ENCODE measurements at regions of chr18 and their contacts with region 1.

Region 1: DNA sequence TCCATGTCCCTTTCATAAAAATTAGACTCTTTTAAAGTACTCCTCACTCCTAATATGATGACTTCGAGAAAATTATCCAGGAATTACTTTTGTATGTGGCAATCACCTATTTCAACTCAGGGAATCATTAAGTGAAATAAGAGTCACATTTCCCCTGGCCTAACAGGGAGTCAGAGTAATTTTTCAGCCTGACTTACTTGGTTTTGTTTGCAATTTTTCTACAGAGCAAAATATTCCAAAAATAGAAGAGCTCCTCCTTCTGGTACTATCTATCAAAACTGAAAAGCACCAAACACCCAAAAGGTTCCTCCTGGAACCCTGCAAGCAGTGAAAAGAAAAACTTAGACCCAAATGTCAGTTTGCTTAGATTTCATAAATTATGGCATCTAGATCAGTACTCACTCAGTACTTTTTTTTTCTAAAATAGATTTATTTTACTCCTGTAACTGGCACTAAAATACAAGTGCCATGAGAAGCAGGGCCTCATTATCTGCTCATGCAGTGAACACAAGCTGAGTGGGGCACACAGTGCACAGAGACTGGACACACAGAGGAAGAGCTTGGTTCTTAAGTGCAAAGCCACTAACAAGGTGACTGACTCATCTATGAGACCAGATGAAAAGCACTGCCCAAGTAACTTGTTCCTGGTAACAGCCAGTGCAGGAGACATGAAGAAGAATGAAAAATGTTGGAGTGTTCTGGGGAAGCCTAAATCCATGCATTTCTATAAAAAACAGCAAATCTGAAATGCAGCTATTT is 28.7 kb downstream of the ACAA2 start:
- DNase-seq: peak; percentile 23
- ATAC-seq: peak; percentile 27
- H3K4me3 ChIP-seq: no peak overlapping the region
- H3K27ac ChIP-seq: no peak overlapping the region
- H3K4me1 ChIP-seq: 0 out of 2 replicates have a peak, but pooled peaks cover 4% of the 10 kb centered on the region
- H3K27me3 ChIP-seq: no peaks in the 10 kb centered on the region
- CTCF ChIP-seq: peak; percentile 39; the same call in 1 of the 2 replicates

Region 2: GRCh38 chr18:49555641-49556040 is 229.0 kb before region 1 on chr18:
- CTCF ChIA-PET with region 1: no interaction called
- POLR2A ChIA-PET with region 1: no interaction called
- intact Hi-C with region 1: loop called (anchors 5 kb)
- DNase-seq: no peak
- ATAC-seq: no peak
- H3K4me3 ChIP-seq: no peak overlapping the region
- H3K27ac ChIP-seq: no peak overlapping the region
- H3K4me1 ChIP-seq: no peaks in the 10 kb centered on the region
- H3K27me3 ChIP-seq: no peaks in the 10 kb centered on the region
- CTCF ChIP-seq: no peak

Region 3: GRCh38 chr18:49878567-49879270 is 94.1 kb after region 1 on chr18:
- CTCF ChIA-PET with region 1: no interaction called
- POLR2A ChIA-PET with region 1: no interaction called
- intact Hi-C with region 1: no loop called
- DNase-seq: no peak
- ATAC-seq: no peak
- H3K4me3 ChIP-seq: no peak overlapping the region
- H3K27ac ChIP-seq: no peak overlapping the region
- H3K4me1 ChIP-seq: no peaks in the 10 kb centered on the region
- H3K27me3 ChIP-seq: no peaks in the 10 kb centered on the region
- CTCF ChIP-seq: no peak

Measured in PC-3 (cell line).